Activated T-helper 2 cell treated with anti-CD3 and anti-CD28 coated beads, Interferon-gamma antibody, Interleukin-2, Interleukin-4, amounts not matched to agents 10 μg/mL and 5 μg/mL and 100 μg/mL, durations not matched to agents 14 hours and 24 hours and 36 hours (primary cell): ENCODE measurements at regions of chr3 and their contacts with region 1.

Region 1: GRCh38 chr3:10738688-10739372 is 77.2 kb upstream of the SLC6A11 start:
- DNase-seq: peak; percentile 53
- H3K4me3 Mint-ChIP-seq: no peak overlapping the region
- H3K27ac Mint-ChIP-seq: no peak overlapping the region
- H3K4me1 Mint-ChIP-seq: no peaks in the 10 kb centered on the region
- H3K27me3 Mint-ChIP-seq: peaks cover 16% of the 10 kb centered on the region

Region 2: GRCh38 chr3:10344147-10344943 is 394.5 kb before region 1 on chr3:
- intact Hi-C with region 1: loop called (anchors 2 kb)
- DNase-seq: peak; percentile 34
- H3K4me3 Mint-ChIP-seq: no peak overlapping the region
- H3K27ac Mint-ChIP-seq: no peak overlapping the region
- H3K4me1 Mint-ChIP-seq: no peaks in the 10 kb centered on the region
- H3K27me3 Mint-ChIP-seq: no peaks in the 10 kb centered on the region

Region 3: GRCh38 chr3:10417849-10418248 is 321.0 kb before region 1 on chr3:
- intact Hi-C with region 1: loop called (anchors 2 kb)
- DNase-seq: no peak
- H3K4me3 Mint-ChIP-seq: no peak overlapping the region
- H3K27ac Mint-ChIP-seq: no peak overlapping the region
- H3K4me1 Mint-ChIP-seq: peaks cover 2% of the 10 kb centered on the region
- H3K27me3 Mint-ChIP-seq: peaks cover 3% of the 10 kb centered on the region

Region 4: GRCh38 chr3:10722911-10723310 is 15.9 kb before region 1 on chr3:
- intact Hi-C with region 1: no loop called
- DNase-seq: no peak
- H3K4me3 Mint-ChIP-seq: no peak overlapping the region
- H3K27ac Mint-ChIP-seq: no peak overlapping the region
- H3K4me1 Mint-ChIP-seq: no peaks in the 10 kb centered on the region
- H3K27me3 Mint-ChIP-seq: no peaks in the 10 kb centered on the region

Region 5: DNA sequence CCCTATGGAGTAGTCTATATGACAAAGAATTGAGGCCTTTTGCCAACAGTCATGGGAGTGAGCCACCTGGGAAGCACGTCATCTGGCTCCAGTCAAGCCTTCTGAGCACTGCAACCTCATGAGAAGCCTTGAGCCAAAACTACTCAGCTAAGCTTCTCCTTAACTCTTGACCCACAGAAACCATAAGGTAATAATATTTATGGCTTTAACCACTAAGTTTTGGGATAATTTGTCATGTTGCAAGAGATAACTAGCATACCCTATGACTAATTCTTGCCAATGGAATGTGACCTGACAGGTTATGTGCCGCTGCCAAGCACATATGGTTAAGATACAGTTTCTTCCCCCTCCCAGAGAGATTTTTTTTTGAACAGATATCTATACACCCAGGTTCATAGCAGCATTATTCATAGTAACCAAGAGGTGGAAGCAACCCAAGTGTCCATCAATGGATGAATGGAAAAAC is 65.4 kb after region 1 on chr3:
- intact Hi-C with region 1: no loop called
- DNase-seq: no peak
- H3K4me3 Mint-ChIP-seq: no peak overlapping the region
- H3K27ac Mint-ChIP-seq: no peak overlapping the region
- H3K4me1 Mint-ChIP-seq: no peaks in the 10 kb centered on the region
- H3K27me3 Mint-ChIP-seq: peaks cover 2% of the 10 kb centered on the region